ENCODE measurements at regions of chr5 and their contacts with region 1.

Region 1: GRCh38 chr5:176415952-176416924 is at the start of gene CLTB:
- DNase-seq: peak; percentile 89 to 90
- H3K4me3 ChIP-seq: peak within 1 kb of the TSS; percentile 34 to 93 (median 88)
- H3K27ac ChIP-seq: peak within 1 kb of the TSS; percentile 75 to 87 (median 77)
- H3K4me1 ChIP-seq: peaks cover 17 to 30% of the 10 kb centered on the region in 2 donors
- H3K27me3 ChIP-seq: no peaks in the 10 kb centered on the region
- CTCF ChIP-seq: peak; percentile 16 to 98 (median 73)
- POLR2A ChIP-seq: peak in 1 of 2 donors; percentile 96
- total RNA-seq, gene CLTB: 95.2 to 139 (median 112) TPM

Region 2: DNA sequence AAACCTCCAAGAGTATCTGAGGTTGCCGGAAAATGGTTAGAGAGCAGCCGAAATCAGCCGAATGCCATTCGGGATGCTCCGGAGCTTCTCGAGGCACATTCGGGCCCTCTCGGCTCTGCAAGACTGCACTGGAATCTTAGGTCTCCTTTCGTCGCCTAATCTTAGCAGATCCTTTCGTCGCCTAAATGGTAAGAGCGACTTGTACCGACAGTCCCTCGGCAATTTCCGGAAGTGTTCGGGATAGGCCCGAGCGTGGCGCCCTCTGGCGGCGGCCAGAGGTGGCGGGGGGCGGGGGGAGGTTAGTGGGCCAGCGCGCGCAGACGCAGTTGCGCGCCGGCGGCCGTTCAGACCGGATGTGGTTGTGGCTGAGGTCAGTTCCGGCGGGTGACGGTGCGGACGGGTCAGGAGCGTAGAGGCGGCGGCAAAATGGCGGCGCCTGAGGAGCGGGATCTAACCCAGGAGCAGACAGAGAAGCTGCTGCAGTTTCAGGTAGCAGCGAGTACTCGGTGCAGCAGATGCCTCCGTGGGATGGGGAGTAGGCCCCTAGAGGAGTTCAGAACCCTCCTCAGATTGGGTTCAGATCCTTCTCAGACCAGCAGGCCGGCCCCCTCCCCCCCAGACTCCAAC is 31.9 kb after region 1 on chr5 and contains the start of gene FAF2:
- intact Hi-C with region 1: loop called (anchors 5 kb)
- DNase-seq: peak; percentile 95 to 96
- H3K4me3 ChIP-seq: peak within 1 kb of the TSS; percentile 76 to 94 (median 81)
- H3K27ac ChIP-seq: peak within 1 kb of the TSS; percentile 81 to 95 (median 85)
- H3K4me1 ChIP-seq: peaks cover 13 to 19% of the 10 kb centered on the region in 2 donors
- H3K27me3 ChIP-seq: no peaks in the 10 kb centered on the region
- CTCF ChIP-seq: peak; percentile 88 to 99 (median 98)
- POLR2A ChIP-seq: peak; percentile 36 to 79
- total RNA-seq, gene FAF2: 33.6 to 186 (median 43.2) TPM

Region 3: DNA sequence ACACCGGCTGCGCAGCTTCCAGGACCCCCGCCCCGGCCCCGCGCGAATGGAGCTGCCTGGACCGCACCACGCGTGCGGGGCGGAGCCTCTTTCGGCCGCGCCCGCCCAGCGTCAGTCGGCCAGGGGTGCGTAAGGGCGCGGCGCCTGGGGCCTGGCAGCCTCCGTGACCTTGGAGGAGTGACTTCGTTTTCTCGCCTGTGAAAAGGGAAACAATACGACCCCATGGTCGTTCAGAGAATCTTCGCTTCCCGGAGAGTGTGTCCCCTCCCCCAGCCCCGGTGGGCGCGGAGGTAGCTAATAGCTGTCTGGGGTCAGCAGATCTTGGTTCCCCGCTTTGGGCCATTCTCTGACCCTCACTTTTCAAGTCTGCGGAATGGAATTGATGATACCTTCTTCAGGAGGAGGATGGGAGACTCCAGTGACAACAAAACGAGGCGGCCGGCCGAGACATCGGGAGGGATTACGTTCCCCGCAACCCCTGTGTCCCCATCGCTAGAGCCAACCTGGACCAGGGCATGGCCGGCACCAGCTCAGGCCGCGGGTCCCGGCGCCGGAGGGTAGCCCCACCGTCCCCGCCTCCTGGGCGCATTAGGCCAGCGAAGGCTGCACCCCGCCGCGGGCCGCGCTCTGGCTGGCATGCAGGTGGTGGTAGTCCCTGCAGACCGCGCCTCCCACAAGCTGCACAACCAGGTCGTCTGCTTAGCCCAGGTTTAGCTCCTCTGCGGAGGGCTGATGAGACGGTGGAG is 127.4 kb after region 1 on chr5:
- intact Hi-C with region 1: loop called (anchors 5 kb)
- DNase-seq: peak; percentile 76 to 79
- H3K4me3 ChIP-seq: peak overlapping the region; percentile 5 to 50 (median 42)
- H3K27ac ChIP-seq: peak overlapping the region; percentile 54 to 68 (median 61)
- H3K4me1 ChIP-seq: peaks cover 8 to 22% of the 10 kb centered on the region in 2 donors
- H3K27me3 ChIP-seq: no peaks in the 10 kb centered on the region
- CTCF ChIP-seq: no peak
- POLR2A ChIP-seq: peak in 1 of 2 donors; percentile 83

Region 4: DNA sequence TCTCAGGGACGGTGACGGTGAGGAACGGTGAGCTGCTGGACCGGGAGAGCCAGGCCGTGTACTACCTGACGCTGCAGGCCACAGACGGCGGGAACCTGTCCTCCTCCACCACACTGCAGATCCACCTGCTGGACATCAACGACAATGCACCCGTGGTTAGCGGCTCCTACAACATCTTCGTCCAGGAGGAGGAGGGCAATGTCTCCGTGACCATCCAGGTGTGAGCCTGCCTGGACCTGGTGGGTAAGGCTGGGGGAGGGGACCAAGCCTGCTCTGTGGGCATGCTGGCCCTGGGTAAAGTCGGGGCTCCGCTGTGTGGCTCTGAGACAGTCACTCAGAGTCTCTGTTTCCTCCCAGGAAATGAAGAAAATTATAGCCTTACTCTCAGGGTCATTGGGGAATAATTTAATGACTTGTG is 162.2 kb after region 1 on chr5:
- intact Hi-C with region 1: loop called (anchors 5 kb)
- DNase-seq: peak; percentile 77 to 78
- H3K4me3 ChIP-seq: no peak overlapping the region
- H3K27ac ChIP-seq: no peak overlapping the region
- H3K4me1 ChIP-seq: no peaks in the 10 kb centered on the region
- H3K27me3 ChIP-seq: no peaks in the 10 kb centered on the region
- CTCF ChIP-seq: peak; percentile 28 to 75 (median 58)
- POLR2A ChIP-seq: no peak

Region 5: GRCh38 chr5:176658007-176658599 is 241.9 kb after region 1 on chr5:
- intact Hi-C with region 1: loop called (anchors 5 kb)
- DNase-seq: peak; percentile 50 to 56
- H3K4me3 ChIP-seq: no peak overlapping the region
- H3K27ac ChIP-seq: no peak overlapping the region
- H3K4me1 ChIP-seq: peaks cover 0 to 5% of the 10 kb centered on the region in 2 donors
- H3K27me3 ChIP-seq: no peaks in the 10 kb centered on the region
- CTCF ChIP-seq: peak in 5 of 6 experiments; percentile 17 to 74 (median 44)
- POLR2A ChIP-seq: no peak

Region 6: DNA sequence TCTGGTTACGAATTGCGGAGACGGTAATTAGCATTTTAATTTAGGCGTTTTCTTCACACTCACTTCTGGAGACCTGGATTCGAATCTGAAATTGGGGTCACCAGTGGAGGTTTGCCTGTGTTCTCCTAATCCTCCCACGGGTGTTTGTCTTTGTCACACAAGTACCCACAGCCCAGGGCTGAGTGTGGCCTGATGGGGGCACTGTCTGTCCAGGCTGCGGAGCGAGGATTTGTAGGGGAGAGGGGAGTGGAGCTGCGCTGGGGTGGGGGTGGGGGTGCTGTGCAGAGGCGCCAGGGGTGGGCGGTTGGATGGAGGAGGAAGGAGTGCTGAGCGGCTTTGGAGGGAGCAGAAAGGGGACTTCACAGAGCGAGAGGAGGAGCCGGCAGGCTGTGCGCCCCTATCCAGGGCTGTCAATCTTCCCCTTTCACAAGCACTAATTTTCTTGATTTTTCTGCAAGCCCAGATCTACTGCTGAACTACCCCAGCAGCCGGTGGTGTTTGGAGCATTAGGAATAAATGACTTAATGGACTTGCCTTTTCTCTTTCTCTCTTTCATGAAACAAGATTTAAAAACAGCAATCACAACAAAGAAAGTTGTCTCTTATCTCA is 284.1 kb after region 1 on chr5:
- intact Hi-C with region 1: no loop called
- DNase-seq: no peak
- H3K4me3 ChIP-seq: no peak overlapping the region
- H3K27ac ChIP-seq: no peak overlapping the region
- H3K4me1 ChIP-seq: no peaks in the 10 kb centered on the region
- H3K27me3 ChIP-seq: no peaks in the 10 kb centered on the region
- CTCF ChIP-seq: no peak
- POLR2A ChIP-seq: no peak